Activated naive CD4-positive, alpha-beta T cell treated with anti-CD3 and anti-CD28 coated beads for 36 hours (primary cell): ENCODE measurements at regions of chr16 and their contacts with region 1.

Region 1: DNA sequence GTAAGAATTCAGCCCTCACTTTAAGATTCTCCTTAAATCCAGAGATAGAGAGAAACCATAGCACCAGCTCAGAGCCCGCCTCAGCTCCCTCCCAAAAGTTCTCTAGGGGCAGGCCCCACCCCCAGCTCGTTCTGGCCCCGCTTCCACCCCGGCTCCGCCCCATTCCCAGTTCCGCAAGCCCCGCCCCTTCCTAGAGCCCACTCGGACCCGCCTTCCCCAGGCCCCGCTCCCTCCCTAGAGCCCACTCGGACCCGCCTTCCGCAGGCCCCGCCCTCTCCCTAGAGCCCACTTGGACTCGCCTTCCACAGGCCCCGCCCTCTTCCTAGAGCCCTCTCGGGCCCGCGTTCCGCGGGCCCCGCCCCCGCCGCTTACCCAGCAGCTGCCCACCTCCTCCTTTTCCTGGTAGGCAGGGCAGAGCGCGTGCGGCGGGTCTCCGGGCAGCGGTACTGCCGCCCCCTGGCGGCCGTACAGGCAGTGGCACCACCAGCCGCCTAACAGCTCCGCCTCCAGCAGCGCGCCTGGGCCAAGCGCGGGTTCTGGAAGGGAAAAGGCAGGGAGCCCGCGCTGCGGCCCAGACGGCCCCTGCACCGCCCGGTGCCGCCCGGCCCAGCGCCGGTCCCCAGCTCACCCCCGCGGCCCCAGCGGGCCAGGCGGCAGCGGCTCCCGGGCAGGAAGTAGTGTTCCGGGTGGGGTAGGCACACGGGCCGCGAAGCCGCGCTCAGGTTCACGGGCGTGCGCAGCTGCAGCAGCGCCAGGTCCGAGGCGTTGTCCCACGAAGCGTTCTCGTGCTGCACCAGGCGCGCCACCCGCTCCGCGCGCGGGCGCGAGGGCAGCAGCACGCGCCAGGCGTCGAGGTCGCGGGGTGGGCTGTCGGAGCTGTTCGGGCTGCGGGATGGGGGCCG is 6.8 kb upstream of the PRSS8 start:
- DNase-seq: peak; percentile 99
- H3K4me3 Mint-ChIP-seq: peak overlapping the region; percentile 64
- H3K27ac Mint-ChIP-seq: peak overlapping the region; percentile 84
- H3K4me1 Mint-ChIP-seq: peaks cover 12% of the 10 kb centered on the region
- H3K27me3 Mint-ChIP-seq: no peaks in the 10 kb centered on the region

Region 2: GRCh38 chr16:30984669-30985400 is 157.5 kb before region 1 on chr16 and contains the start of gene HSD3B7:
- CTCF ChIA-PET with region 1: interaction called, 29 read pairs
- intact Hi-C with region 1: loop called (anchors 1 kb)
- DNase-seq: peak; percentile 87
- H3K4me3 Mint-ChIP-seq: no peak within 1 kb of the TSS
- H3K27ac Mint-ChIP-seq: no peak within 1 kb of the TSS
- H3K4me1 Mint-ChIP-seq: no peaks in the 10 kb centered on the region
- H3K27me3 Mint-ChIP-seq: no peaks in the 10 kb centered on the region
- total RNA-seq, gene HSD3B7: 0.69 to 0.98 TPM

Region 3: GRCh38 chr16:31032736-31033708 is 109.3 kb before region 1 on chr16 and contains the start of gene STX4:
- CTCF ChIA-PET with region 1: no interaction called
- intact Hi-C with region 1: loop called (anchors 1 kb)
- DNase-seq: peak; percentile 99
- H3K4me3 Mint-ChIP-seq: peak within 1 kb of the TSS; percentile 96
- H3K27ac Mint-ChIP-seq: peak within 1 kb of the TSS; percentile 93
- H3K4me1 Mint-ChIP-seq: peaks cover 22% of the 10 kb centered on the region
- H3K27me3 Mint-ChIP-seq: no peaks in the 10 kb centered on the region
- total RNA-seq, gene STX4: 32.9 to 38.0 TPM

Region 4: DNA sequence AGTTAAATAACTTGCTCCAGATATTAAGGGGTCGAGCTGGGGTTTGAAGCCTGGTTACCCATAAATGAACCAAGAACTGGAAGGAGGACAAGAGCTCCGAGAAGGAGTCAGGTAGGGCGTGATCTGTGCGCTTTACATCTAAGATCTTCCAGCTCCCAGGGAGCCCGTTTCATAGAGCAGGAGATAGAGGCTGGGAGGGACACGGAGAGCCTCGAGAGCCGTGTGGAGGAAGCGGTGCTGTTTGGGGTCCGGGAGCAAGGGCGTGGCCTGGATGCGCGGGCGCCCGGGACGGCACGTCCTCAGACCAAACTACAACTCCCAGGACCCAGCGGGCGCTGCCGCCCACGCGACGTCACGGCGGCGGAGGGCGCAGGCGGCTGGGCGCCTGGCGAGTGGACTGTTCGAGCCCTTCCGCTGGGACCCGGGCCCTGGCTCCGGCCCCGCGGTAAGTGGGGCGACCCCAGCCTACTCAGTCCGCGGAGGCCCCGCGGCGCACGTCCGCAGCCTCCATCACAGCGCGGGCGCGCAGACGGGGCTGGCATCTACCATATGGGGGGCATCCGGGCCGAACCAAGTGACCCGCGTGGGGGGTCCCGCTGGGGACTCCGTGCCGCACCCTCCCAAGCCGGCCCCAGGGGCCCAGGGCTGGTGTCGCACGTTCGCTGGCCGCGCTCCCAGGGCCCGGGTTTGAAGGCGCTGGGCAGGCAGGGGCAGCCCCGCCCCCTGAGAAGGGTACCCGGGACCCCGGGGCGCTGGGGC is 34.1 kb before region 1 on chr16 and contains the start of gene BCKDK:
- CTCF ChIA-PET with region 1: interaction called, 6 read pairs
- intact Hi-C with region 1: loop called (anchors 2 kb)
- DNase-seq: peak; percentile 74
- H3K4me3 Mint-ChIP-seq: peak within 1 kb of the TSS; percentile 89
- H3K27ac Mint-ChIP-seq: peak within 1 kb of the TSS; percentile 80
- H3K4me1 Mint-ChIP-seq: peaks cover 27% of the 10 kb centered on the region
- H3K27me3 Mint-ChIP-seq: no peaks in the 10 kb centered on the region
- total RNA-seq, gene BCKDK: 21.3 to 23.1 TPM

Region 5: GRCh38 chr16:31157136-31157535 is 14.8 kb after region 1 on chr16:
- CTCF ChIA-PET with region 1: interaction called, 14 read pairs
- intact Hi-C with region 1: no loop called
- DNase-seq: no peak
- H3K4me3 Mint-ChIP-seq: peak overlapping the region; percentile 51
- H3K27ac Mint-ChIP-seq: no peak overlapping the region
- H3K4me1 Mint-ChIP-seq: peaks cover 9% of the 10 kb centered on the region
- H3K27me3 Mint-ChIP-seq: no peaks in the 10 kb centered on the region